ENCODE measurements at regions of chr2 and their contacts with region 1.

Region 1: DNA sequence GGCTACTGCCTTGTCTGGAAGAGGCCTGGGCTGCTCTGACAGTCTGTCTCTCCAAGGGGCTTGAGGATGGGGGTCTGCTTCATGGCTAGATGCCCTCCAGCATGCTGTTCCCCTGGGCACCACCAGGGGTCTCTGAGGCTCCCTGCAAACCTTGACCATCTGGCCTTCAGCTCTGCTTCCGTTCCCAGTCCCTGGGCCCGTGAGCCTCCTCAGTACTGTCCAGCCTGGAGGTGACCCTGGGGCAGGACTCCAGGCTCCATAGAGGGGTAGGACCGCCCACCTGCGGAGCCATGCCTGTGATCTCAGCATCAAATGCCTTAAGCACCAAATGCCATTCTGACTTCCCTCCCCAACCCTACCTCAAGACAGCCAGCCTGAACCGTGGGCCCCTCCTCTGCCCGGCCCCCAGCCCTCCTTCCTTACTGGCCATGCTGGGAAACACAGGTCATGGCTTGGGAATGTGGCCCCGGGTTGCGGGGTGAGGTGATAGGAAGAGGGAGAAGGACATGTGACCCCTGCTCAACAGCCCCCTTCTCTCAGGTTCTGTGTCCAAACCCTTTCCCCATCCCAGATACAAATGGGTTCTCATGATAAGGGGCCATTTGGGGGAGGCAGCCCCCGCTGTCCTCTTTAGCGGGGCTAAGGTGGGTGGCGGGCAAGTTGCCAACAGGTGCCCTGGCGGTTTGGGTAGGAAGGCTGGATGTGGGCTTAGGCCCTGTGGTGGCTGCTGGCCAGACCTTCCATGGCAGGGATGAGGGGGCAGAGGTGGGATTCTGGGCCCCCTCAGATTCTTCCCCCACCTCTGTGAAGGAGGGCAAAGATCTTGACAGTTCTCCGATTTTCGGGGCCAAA is 25.0 kb downstream of the SPEG start:
- DNase-seq: peak; percentile 85
- ATAC-seq: peak; percentile 65
- H3K4me3 Mint-ChIP-seq: peak overlapping the region; percentile 30; the same call in 1 of the 2 replicates
- H3K27ac Mint-ChIP-seq: no peak overlapping the region; the same call in 1 of the 2 replicates
- H3K4me1 Mint-ChIP-seq: peaks cover 31% of the 10 kb centered on the region
- H3K27me3 Mint-ChIP-seq: no peaks in the 10 kb centered on the region
- CTCF ChIP-seq: peak; percentile 94

Region 2: GRCh38 chr2:219309278-219309677 is 150.4 kb before region 1 on chr2 and contains the start of gene PTPRN:
- CTCF ChIA-PET with region 1: no interaction called
- POLR2A ChIA-PET with region 1: no interaction called
- DNase-seq: peak; percentile 84
- ATAC-seq: peak; percentile 86
- H3K4me3 Mint-ChIP-seq: peak within 1 kb of the TSS; percentile 85
- H3K27ac Mint-ChIP-seq: no peak within 1 kb of the TSS
- H3K4me1 Mint-ChIP-seq: peaks cover 22% of the 10 kb centered on the region
- H3K27me3 Mint-ChIP-seq: peaks cover 57% of the 10 kb centered on the region
- CTCF ChIP-seq: no peak
- total RNA-seq, gene PTPRN: 3.8 to 5.7 TPM (median 5.2 TPM) in 3 replicates

Region 3: DNA sequence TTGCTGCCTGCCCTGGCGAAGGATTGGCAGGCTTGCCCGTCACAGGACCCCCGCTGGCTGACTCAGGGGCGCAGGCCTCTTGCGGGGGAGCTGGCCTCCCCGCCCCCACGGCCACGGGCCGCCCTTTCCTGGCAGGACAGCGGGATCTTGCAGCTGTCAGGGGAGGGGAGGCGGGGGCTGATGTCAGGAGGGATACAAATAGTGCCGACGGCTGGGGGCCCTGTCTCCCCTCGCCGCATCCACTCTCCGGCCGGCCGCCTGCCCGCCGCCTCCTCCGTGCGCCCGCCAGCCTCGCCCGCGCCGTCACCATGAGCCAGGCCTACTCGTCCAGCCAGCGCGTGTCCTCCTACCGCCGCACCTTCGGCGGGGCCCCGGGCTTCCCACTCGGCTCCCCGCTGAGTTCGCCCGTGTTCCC is 41.5 kb before region 1 on chr2 and contains the start of gene DES:
- CTCF ChIA-PET with region 1: interaction called, 47 read pairs
- POLR2A ChIA-PET with region 1: no interaction called
- DNase-seq: no peak
- ATAC-seq: no peak
- H3K4me3 Mint-ChIP-seq: peak within 1 kb of the TSS; percentile 37
- H3K27ac Mint-ChIP-seq: no peak within 1 kb of the TSS
- H3K4me1 Mint-ChIP-seq: peaks cover 28% of the 10 kb centered on the region
- H3K27me3 Mint-ChIP-seq: peaks cover 38% of the 10 kb centered on the region
- CTCF ChIP-seq: no peak
- total RNA-seq, gene DES: 1.6 to 3.5 TPM (median 2.8 TPM) in 3 replicates

Region 4: GRCh38 chr2:219441451-219442255 is 18.0 kb before region 1 on chr2:
- CTCF ChIA-PET with region 1: interaction called, 121 read pairs
- POLR2A ChIA-PET with region 1: interaction called, 3 read pairs
- DNase-seq: peak; percentile 62
- ATAC-seq: peak; percentile 60
- H3K4me3 Mint-ChIP-seq: peak overlapping the region; percentile 82
- H3K27ac Mint-ChIP-seq: no peak overlapping the region
- H3K4me1 Mint-ChIP-seq: peaks cover 27% of the 10 kb centered on the region
- H3K27me3 Mint-ChIP-seq: peaks cover 22% of the 10 kb centered on the region
- CTCF ChIP-seq: no peak

Region 5: GRCh38 chr2:219484343-219485200 is 24.9 kb after region 1 on chr2:
- CTCF ChIA-PET with region 1: interaction called, 36 read pairs
- POLR2A ChIA-PET with region 1: no interaction called
- DNase-seq: peak; percentile 65
- ATAC-seq: peak; percentile 20
- H3K4me3 Mint-ChIP-seq: peak overlapping the region; percentile 52
- H3K27ac Mint-ChIP-seq: no peak overlapping the region
- H3K4me1 Mint-ChIP-seq: peaks cover 35% of the 10 kb centered on the region
- H3K27me3 Mint-ChIP-seq: peaks cover 32% of the 10 kb centered on the region
- CTCF ChIP-seq: no peak

Region 6: GRCh38 chr2:219498280-219499057 is 38.8 kb after region 1 on chr2 and contains the start of gene GMPPA:
- CTCF ChIA-PET with region 1: interaction called, 51 read pairs
- POLR2A ChIA-PET with region 1: interaction called, 4 read pairs
- DNase-seq: peak; percentile 98
- ATAC-seq: peak; percentile 84
- H3K4me3 Mint-ChIP-seq: peak within 1 kb of the TSS; percentile 98
- H3K27ac Mint-ChIP-seq: peak within 1 kb of the TSS; percentile 99
- H3K4me1 Mint-ChIP-seq: peaks cover 52% of the 10 kb centered on the region
- H3K27me3 Mint-ChIP-seq: peaks cover 45% of the 10 kb centered on the region
- CTCF ChIP-seq: no peak
- total RNA-seq, gene GMPPA: 44.2 to 51.9 TPM (median 49.5 TPM) in 3 replicates

Region 7: DNA sequence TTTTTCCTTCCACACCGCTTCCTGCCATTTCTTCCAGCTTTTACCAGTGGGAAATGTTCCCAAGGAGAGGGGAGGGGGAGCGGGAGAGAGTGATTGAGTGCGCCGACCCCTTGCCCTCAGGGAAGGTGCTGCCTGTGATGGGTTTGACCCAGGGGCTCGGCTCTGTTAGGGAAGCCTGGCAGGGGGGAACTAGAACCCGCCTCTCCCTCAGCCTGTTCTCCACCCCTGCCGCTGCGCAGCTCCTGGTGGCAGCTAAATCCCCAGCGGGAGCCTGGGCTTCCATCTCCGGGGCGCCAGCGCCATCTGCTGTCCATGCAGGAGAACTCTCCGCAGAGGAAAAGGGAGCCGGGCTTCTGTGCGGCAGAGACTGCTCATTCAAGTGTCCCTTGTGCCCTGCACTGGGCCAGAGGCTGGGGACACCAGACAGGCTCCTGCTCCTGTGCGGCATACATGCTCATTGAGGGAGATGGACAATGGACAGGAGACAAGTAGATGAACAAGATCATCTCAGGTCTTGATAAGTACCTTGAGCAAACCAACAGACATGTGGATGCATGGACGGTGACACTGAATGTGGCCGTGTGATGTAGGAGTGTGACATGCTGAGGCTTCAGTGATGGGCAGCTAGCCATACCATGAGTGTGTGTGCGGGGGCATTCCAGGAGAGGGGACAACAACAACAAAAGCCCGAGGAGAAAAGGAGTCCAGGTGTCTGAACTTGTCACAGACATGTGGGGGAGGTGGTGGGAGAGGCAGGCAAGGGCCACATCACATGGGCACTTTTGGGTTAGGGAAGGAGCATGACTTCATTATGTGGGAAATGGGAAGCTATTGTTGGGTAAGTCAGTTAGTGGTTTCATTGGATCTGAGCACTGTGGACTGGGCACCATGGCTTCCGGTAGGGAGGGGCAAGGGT is 70.6 kb after region 1 on chr2:
- CTCF ChIA-PET with region 1: interaction called, 104 read pairs
- POLR2A ChIA-PET with region 1: no interaction called
- DNase-seq: peak; percentile 92
- ATAC-seq: peak; percentile 75
- H3K4me3 Mint-ChIP-seq: peak overlapping the region; percentile 60
- H3K27ac Mint-ChIP-seq: no peak overlapping the region
- H3K4me1 Mint-ChIP-seq: peaks cover 30% of the 10 kb centered on the region
- H3K27me3 Mint-ChIP-seq: peaks cover 56% of the 10 kb centered on the region
- CTCF ChIP-seq: peak; percentile 88

Region 8: GRCh38 chr2:219997341-219997851 is 537.7 kb after region 1 on chr2:
- CTCF ChIA-PET with region 1: no interaction called
- POLR2A ChIA-PET with region 1: no interaction called
- DNase-seq: peak; percentile 85
- ATAC-seq: peak; percentile 86
- H3K4me3 Mint-ChIP-seq: no peak overlapping the region
- H3K27ac Mint-ChIP-seq: no peak overlapping the region
- H3K4me1 Mint-ChIP-seq: peaks cover 15% of the 10 kb centered on the region
- H3K27me3 Mint-ChIP-seq: no peaks in the 10 kb centered on the region; the same call in 1 of the 2 replicates
- CTCF ChIP-seq: peak; percentile 56; the same call in 1 of the 2 replicates